Naive thymus-derived CD8-positive, alpha-beta T cell (primary cell): ENCODE measurements at regions of chr2 and their contacts with region 1.

Region 1: DNA sequence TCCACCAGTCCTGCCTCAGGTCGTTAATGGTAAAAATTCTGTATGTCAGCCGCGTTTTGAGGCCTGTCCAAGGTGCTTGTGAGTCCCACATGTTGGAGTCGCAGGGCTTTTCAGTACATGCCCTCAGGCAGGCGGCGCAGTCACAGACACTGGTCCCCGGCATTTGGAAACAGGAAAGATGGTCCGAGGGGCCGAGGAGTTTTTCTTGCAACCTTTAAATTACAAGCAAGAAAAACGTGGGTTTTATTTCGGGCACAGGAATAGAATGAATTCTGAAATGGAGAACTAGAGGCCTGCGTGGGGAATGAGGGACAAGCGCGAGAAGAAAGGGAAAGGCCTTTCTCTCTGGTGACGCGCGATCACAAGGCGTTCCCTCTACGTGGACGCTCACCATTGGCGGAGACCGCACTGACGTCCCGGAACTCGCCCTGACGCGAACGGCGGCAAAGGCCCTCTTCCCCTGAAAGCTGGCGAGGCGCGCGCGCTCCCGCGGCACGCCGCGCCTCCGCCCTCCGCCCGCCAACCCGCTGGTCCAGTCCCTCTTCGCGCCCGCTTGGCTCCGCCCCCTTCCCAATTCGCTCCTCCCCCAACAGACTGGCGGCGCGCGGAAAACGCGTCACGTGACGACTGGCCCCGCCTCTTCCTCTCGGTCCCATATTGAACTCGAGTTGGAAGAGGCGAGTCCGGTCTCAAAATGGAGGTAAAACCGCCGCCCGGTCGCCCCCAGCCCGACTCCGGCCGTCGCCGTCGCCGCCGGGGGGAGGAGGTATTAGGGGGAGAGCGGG is at the start of gene HNRNPA3:
- DNase-seq: peak; percentile 99 to 100 (median 100)
- ATAC-seq: peak; percentile 83 to 84
- H3K4me3 Mint-ChIP-seq: peak within 1 kb of the TSS; percentile 80 to 98 (median 96)
- H3K27ac Mint-ChIP-seq: peak within 1 kb of the TSS; percentile 98 to 100 (median 99)
- H3K4me1 Mint-ChIP-seq: peaks cover 21 to 57% (median 40%) of the 10 kb centered on the region in 4 donors
- H3K27me3 Mint-ChIP-seq: peaks cover 0 to 4% (median 0%) of the 10 kb centered on the region in 5 donors
- polyA plus RNA-seq, gene HNRNPA3: 47.6 to 56.6 (median 52.1) TPM

Region 2: DNA sequence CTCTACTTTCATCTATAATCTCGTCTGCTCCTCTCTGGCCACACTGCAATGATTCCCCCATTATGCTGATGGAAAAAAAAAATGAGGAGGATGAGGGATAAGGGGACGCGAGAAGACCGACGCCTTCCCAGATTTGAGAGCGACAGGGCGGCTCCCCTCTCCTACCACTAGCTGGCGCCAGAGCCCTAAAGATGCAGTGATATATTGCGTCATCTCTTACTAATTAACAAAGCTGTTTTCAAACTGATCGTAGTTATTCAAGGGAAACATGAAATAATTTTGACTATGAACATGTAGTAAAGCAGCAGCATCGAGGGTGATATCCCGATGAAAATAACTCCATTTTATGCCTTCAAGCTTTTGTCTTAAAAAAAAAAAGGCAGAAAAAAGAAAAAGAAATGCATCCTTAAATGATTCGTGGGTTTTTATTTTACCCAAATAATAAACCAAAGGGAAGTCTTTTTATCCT is 47.7 kb before region 1 on chr2:
- POLR2A ChIA-PET with region 1: interaction called, 25 read pairs
- DNase-seq: peak; percentile 65 to 89 (median 76)
- ATAC-seq: peak; percentile 80 to 81
- H3K4me3 Mint-ChIP-seq: no peak overlapping the region
- H3K27ac Mint-ChIP-seq: no peak overlapping the region
- H3K4me1 Mint-ChIP-seq: peaks cover 7 to 18% (median 15%) of the 10 kb centered on the region in 4 donors
- H3K27me3 Mint-ChIP-seq: peaks cover 0 to 4% (median 2%) of the 10 kb centered on the region in 5 donors

Region 3: GRCh38 chr2:177314194-177314593 is 101.9 kb after region 1 on chr2:
- POLR2A ChIA-PET with region 1: interaction called, 11 read pairs
- DNase-seq: no peak
- ATAC-seq: no peak
- H3K4me3 Mint-ChIP-seq: no peak overlapping the region
- H3K27ac Mint-ChIP-seq: peak overlapping the region in 5 of 10 donors; percentile 29 to 85 (median 65)
- H3K4me1 Mint-ChIP-seq: peaks cover 13 to 35% (median 26%) of the 10 kb centered on the region in 4 donors
- H3K27me3 Mint-ChIP-seq: no peaks in the 10 kb centered on the region

Region 4: GRCh38 chr2:177392373-177393202 is 180.3 kb after region 1 on chr2 and contains the start of gene AGPS:
- POLR2A ChIA-PET with region 1: interaction called, 10 read pairs
- DNase-seq: peak; percentile 63 to 83 (median 69)
- ATAC-seq: peak; percentile 89 to 92
- H3K4me3 Mint-ChIP-seq: peak within 1 kb of the TSS; percentile 87 to 97 (median 92)
- H3K27ac Mint-ChIP-seq: peak within 1 kb of the TSS; percentile 79 to 96 (median 92)
- H3K4me1 Mint-ChIP-seq: peaks cover 33 to 65% (median 52%) of the 10 kb centered on the region in 4 donors
- H3K27me3 Mint-ChIP-seq: no peaks in the 10 kb centered on the region
- polyA plus RNA-seq, gene AGPS: 13.0 to 16.3 (median 13.2) TPM